ENCODE measurements at regions of chr6 and their contacts with region 1.

Region 1: GRCh38 chr6:108848116-108848868 is at the start of gene ARMC2:
- DNase-seq: peak; percentile 80 to 89
- ATAC-seq: peak; percentile 93 to 95
- H3K4me3 ChIP-seq: peak within 1 kb of the TSS; percentile 69 to 89 (median 84)
- H3K27ac ChIP-seq: peak within 1 kb of the TSS; percentile 75 to 83 (median 81)
- H3K4me1 ChIP-seq: peaks cover 17 to 30% of the 10 kb centered on the region in 2 donors
- H3K27me3 ChIP-seq: no peaks in the 10 kb centered on the region
- CTCF ChIP-seq: no peak
- POLR2A ChIP-seq: peak; percentile 39 to 62
- total RNA-seq, gene ARMC2: 0.20 to 1.8 (median 0.56) TPM

Region 2: DNA sequence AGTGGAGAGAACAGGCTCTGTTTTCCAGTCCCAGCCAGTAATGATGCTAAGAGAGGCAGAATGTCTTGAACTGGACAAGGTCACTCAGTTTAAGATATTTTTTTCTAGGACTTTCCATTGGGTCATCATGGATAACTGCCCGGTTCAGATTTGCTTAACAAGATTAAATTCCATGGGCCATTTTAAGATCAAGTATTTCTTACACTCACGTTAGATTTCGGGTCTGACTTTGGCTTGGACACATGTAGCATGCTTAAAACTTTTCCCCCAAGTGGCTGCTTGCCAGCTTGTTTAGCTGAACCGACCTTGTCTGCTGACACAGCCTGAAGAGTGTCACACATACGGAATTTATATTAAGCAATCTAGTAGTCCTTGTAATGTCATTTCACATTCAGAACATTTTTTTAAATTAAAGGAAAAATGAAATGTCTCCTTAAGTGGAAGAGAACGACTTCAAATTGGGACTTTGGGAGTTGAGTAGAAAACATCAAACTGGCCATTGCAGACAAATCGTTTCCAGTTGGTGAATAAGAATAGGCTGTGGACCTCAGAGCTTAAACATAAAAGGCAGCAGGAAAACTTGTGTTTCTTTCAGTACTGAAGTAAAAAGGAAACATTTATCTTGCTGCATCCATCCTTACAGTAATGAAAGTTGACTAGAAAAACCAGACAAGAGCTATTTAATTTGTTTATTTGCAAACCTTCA is 28.9 kb after region 1 on chr6:
- in situ Hi-C with region 1: no loop called
- intact Hi-C with region 1: loop called (anchors 2 kb)
- DNase-seq: peak; percentile 70 to 75
- ATAC-seq: peak; percentile 82 to 83
- H3K4me3 ChIP-seq: no peak overlapping the region
- H3K27ac ChIP-seq: peak overlapping the region; percentile 41 to 71 (median 62)
- H3K4me1 ChIP-seq: peaks cover 12 to 18% of the 10 kb centered on the region in 2 donors
- H3K27me3 ChIP-seq: no peaks in the 10 kb centered on the region
- CTCF ChIP-seq: no peak
- POLR2A ChIP-seq: no peak

Region 3: GRCh38 chr6:108896111-108896661 is 47.9 kb after region 1 on chr6:
- in situ Hi-C with region 1: loop called in 2 of 4 experiments (anchors 5 to 10 kb)
- intact Hi-C with region 1: no loop called
- DNase-seq: no peak
- ATAC-seq: no peak
- H3K4me3 ChIP-seq: no peak overlapping the region
- H3K27ac ChIP-seq: peak overlapping the region; percentile 55 to 75 (median 62)
- H3K4me1 ChIP-seq: peaks cover 31 to 37% of the 10 kb centered on the region in 2 donors
- H3K27me3 ChIP-seq: no peaks in the 10 kb centered on the region
- CTCF ChIP-seq: no peak
- POLR2A ChIP-seq: no peak

Region 4: GRCh38 chr6:109073344-109074132 is 225.2 kb after region 1 on chr6:
- in situ Hi-C with region 1: no loop called
- intact Hi-C with region 1: loop called (anchors 5 kb)
- DNase-seq: peak in 1 of 2 donors; percentile 34
- ATAC-seq: peak; percentile 66 to 84
- H3K4me3 ChIP-seq: peak overlapping the region in 1 of 4 donors; percentile 4
- H3K27ac ChIP-seq: peak overlapping the region; percentile 37 to 98 (median 57)
- H3K4me1 ChIP-seq: peaks cover 82 to 94% of the 10 kb centered on the region in 2 donors
- H3K27me3 ChIP-seq: no peaks in the 10 kb centered on the region
- CTCF ChIP-seq: peak; percentile 61 to 73 (median 67)
- POLR2A ChIP-seq: no peak

Region 5: DNA sequence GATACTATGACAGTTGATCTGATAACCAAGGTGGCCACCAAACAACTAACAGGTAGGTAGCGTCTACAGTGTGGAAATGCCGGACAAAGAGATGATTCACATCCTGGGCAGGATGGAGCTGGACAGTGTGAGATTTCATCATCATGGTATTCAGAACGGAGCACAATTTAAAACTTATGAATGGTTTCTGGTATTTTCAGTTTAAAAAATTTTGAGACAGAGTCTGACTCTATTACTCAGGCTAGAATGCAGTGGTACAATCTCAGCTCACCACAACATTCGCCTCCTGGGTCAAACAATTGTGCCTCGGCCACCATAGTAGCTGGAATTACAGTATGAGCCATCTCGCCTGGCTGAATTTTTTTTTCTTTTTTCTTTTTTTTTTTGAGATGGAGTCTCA is 290.8 kb after region 1 on chr6:
- in situ Hi-C with region 1: no loop called
- intact Hi-C with region 1: no loop called
- DNase-seq: no peak
- ATAC-seq: no peak
- H3K4me3 ChIP-seq: no peak overlapping the region
- H3K27ac ChIP-seq: no peak overlapping the region
- H3K4me1 ChIP-seq: peaks cover 0 to 5% of the 10 kb centered on the region in 2 donors
- H3K27me3 ChIP-seq: no peaks in the 10 kb centered on the region
- CTCF ChIP-seq: no peak
- POLR2A ChIP-seq: no peak

Measured in gastrocnemius medialis (tissue), 4 donors.